ENCODE measurements at regions of chr10 and their contacts with region 1.

Region 1: DNA sequence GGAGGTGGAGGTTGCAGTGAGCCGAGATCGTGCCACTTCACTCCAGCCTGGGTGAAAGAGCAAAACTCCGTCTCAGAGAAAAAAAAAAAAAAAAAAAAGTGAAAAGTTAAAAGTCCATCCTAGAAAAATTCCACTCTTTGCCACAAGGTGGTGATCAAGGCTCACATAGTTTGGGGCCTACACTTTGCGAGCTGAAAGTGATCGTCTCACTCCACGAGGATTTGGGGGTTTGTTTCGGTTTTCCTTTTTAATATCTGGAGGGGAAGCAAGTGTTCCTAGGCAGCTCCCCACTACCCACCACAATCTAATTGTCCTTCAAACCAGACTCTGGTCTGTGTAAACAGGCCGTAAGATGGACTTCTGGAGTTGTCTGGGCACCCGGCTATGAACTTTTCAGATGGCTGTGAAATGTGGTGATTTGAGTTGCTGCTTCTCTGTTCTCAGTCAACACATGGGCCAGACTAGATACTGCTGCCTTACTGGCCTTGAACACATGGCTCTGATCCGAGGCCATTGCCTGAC is 27.1 kb downstream of the PRLHR start:
- DNase-seq: peak; percentile 56
- ATAC-seq: peak; percentile 69
- H3K4me3 ChIP-seq: no peak overlapping the region
- H3K27ac ChIP-seq: no peak overlapping the region
- H3K4me1 ChIP-seq: peaks cover 2% of the 10 kb centered on the region; the same call in 1 of the 2 replicates
- H3K27me3 ChIP-seq: peaks cover 10% of the 10 kb centered on the region
- CTCF ChIP-seq: peak; percentile 82
- POLR2A ChIP-seq: no peak
- RAD21 ChIP-seq: peak; percentile 85

Region 2: GRCh38 chr10:118551535-118552100 is 16.8 kb before region 1 on chr10:
- CTCF ChIA-PET with region 1: no interaction called
- POLR2A ChIA-PET with region 1: no interaction called
- dilution Hi-C with region 1: no loop called
- in situ Hi-C with region 1: no loop called
- intact Hi-C with region 1: no loop called
- DNase-seq: no peak
- ATAC-seq: no peak
- H3K4me3 ChIP-seq: no peak overlapping the region
- H3K27ac ChIP-seq: no peak overlapping the region
- H3K4me1 ChIP-seq: no peaks in the 10 kb centered on the region
- H3K27me3 ChIP-seq: no peaks in the 10 kb centered on the region
- CTCF ChIP-seq: no peak
- POLR2A ChIP-seq: no peak
- RAD21 ChIP-seq: no peak

Region 3: DNA sequence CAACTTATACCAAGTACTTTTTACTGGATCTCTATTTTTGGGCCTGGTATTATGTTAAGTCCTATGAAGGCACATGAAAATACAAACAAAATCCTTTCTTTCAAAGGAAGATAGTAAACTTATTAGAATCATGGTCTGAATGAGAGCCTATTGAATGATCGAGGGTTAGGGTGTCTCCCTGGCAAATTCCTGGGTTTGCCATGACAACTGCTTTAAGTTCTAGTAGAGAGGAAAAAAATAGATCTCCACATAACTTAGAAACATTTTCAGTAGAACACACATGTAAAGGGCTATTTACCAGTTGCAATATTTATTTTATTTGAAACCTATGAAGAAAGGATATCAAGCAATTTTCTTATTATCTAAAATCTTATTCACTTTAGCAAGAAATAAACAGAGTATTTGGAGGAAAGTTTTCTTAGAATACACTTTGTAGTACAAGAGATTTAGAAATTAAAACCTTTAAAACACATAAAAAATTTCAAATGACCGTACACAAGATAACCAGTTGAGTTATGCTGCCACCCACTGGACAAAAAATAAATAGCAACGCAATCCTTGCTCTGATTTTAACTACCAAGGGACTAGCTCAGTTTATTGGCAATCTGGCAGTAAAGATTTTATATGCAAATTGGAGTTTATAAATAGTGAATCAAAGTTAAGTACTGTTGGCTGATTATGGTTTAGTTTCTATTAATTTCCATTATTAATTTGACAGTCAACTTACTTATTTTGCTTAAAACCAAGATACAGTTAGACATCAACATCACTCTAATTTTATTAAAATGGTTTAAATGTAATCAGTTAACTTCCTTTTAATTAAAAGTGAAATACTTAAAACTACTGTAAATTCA is 152.5 kb after region 1 on chr10:
- CTCF ChIA-PET with region 1: interaction called, 15 read pairs
- POLR2A ChIA-PET with region 1: interaction called, 5 read pairs
- dilution Hi-C with region 1: no loop called
- in situ Hi-C with region 1: loop called (anchors 5 kb)
- intact Hi-C with region 1: loop called (anchors 1 kb)
- DNase-seq: peak; percentile 62
- ATAC-seq: peak; percentile 82
- H3K4me3 ChIP-seq: no peak overlapping the region
- H3K27ac ChIP-seq: no peak overlapping the region
- H3K4me1 ChIP-seq: peaks cover 9% of the 10 kb centered on the region
- H3K27me3 ChIP-seq: no peaks in the 10 kb centered on the region
- CTCF ChIP-seq: peak; percentile 86
- POLR2A ChIP-seq: no peak
- RAD21 ChIP-seq: peak; percentile 82

Region 4: GRCh38 chr10:118754720-118755480 is 186.5 kb after region 1 on chr10 and contains the start of gene CACUL1:
- CTCF ChIA-PET with region 1: no interaction called
- POLR2A ChIA-PET with region 1: no interaction called
- dilution Hi-C with region 1: no loop called
- in situ Hi-C with region 1: no loop called
- intact Hi-C with region 1: loop called (anchors 1 kb)
- DNase-seq: peak; percentile 100
- ATAC-seq: peak; percentile 94
- H3K4me3 ChIP-seq: peak within 1 kb of the TSS; percentile 88
- H3K27ac ChIP-seq: peak within 1 kb of the TSS; percentile 77
- H3K4me1 ChIP-seq: no peaks in the 10 kb centered on the region
- H3K27me3 ChIP-seq: 0 out of 2 replicates have a peak, but pooled peaks cover 1% of the 10 kb centered on the region
- CTCF ChIP-seq: no peak
- POLR2A ChIP-seq: peak; percentile 85
- RAD21 ChIP-seq: no peak
- total RNA-seq, gene CACUL1: 23.5 and 24.7 TPM in 2 replicates

Region 5: GRCh38 chr10:118850418-118851061 is 282.2 kb after region 1 on chr10:
- CTCF ChIA-PET with region 1: interaction called, 4 read pairs
- POLR2A ChIA-PET with region 1: no interaction called
- dilution Hi-C with region 1: no loop called
- in situ Hi-C with region 1: loop called (anchors 10 kb)
- intact Hi-C with region 1: loop called (anchors 1 kb)
- DNase-seq: peak; percentile 36
- ATAC-seq: peak; percentile 32; the same call in 1 of the 2 replicates
- H3K4me3 ChIP-seq: no peak overlapping the region
- H3K27ac ChIP-seq: no peak overlapping the region
- H3K4me1 ChIP-seq: no peaks in the 10 kb centered on the region
- H3K27me3 ChIP-seq: peaks cover 9% of the 10 kb centered on the region
- CTCF ChIP-seq: peak; percentile 46
- POLR2A ChIP-seq: no peak
- RAD21 ChIP-seq: peak; percentile 47

Region 6: DNA sequence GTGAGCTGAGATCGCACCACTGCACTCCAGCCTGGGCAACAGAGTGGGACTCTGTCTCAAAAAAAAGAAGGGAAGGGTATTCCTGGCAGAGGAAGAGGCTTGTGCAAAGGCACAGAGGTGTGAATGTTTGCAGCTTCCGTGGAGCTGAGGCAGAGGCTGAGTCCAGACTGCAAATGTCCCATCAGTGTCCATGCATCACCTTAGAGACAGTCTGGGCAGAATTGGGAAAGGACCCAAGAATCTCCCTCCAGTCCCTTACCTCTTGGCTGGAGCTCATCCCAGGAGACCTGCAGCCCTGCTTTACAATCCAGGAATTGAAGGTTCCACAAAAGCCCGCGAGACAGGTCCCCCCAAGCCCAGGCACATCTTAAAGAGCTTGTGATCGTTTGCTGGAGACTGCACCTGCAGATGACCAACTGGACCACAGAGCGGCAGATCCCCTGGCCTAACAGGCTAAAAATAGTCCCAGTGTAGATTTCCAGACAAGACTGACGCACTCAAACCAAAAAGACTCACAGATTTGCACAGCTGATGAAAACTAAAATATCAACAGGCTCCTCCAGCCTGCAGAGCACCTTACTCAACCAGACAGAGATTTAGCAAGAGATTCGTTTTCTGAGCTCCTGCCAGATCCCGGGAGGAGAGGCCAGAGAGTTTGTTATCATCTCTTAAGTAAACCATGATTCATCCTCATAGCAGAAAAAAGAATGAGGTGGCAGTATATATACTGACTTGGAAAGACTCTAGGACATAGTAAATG is 438.2 kb after region 1 on chr10:
- CTCF ChIA-PET with region 1: no interaction called
- POLR2A ChIA-PET with region 1: no interaction called
- dilution Hi-C with region 1: no loop called
- in situ Hi-C with region 1: no loop called
- intact Hi-C with region 1: loop called (anchors 5 kb)
- DNase-seq: peak; percentile 100
- ATAC-seq: peak; percentile 91
- H3K4me3 ChIP-seq: no peak overlapping the region
- H3K27ac ChIP-seq: no peak overlapping the region
- H3K4me1 ChIP-seq: peaks cover 12% of the 10 kb centered on the region
- H3K27me3 ChIP-seq: peaks cover 25% of the 10 kb centered on the region
- CTCF ChIP-seq: 0 out of 2 replicates have a peak, but pooled peaks have one; percentile 3
- POLR2A ChIP-seq: no peak
- RAD21 ChIP-seq: no peak

Region 7: DNA sequence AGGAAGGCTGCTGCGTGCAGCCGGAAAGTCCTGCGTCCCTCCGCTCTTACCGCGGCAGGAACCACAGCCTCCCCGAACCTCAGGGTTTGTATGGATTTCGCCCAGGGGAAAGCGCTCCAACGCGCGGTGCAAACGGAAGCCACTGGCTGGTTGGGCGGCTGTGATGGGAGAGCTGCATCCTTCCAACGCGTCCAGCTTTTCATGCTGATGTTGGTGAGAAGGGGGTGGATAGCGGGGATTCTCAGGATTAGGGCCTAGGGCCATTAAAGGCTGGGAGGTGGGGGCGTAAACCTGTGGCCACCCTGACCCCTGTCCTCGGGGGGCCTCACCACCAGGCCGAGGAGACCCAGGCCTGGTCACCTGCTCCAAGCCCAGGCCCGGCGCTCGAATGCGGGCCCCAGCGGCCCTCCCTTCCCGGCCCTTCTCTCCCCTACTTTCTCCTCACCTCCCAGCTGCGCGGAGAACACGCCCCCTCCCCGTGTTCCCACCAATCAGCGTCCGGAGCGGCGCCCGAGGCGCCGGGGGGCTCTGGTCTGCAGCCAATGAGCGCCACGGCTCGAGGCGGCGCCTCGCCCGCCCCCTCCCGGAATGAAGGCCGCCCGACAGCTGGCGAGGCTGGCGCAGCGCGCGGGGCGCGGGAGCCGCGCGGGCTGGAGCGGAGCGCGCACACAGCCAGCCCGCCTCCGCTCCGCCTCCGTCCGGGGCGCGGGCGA is 460.7 kb after region 1 on chr10:
- CTCF ChIA-PET with region 1: no interaction called
- POLR2A ChIA-PET with region 1: no interaction called
- dilution Hi-C with region 1: no loop called
- in situ Hi-C with region 1: no loop called
- intact Hi-C with region 1: loop called (anchors 2 kb)
- DNase-seq: peak; percentile 81
- ATAC-seq: peak; percentile 84
- H3K4me3 ChIP-seq: peak overlapping the region; percentile 60; the same call in 1 of the 2 replicates
- H3K27ac ChIP-seq: no peak overlapping the region
- H3K4me1 ChIP-seq: peaks cover 9% of the 10 kb centered on the region
- H3K27me3 ChIP-seq: peaks cover 2% of the 10 kb centered on the region; the same call in 1 of the 2 replicates
- CTCF ChIP-seq: peak; percentile 26; the same call in 1 of the 2 replicates
- POLR2A ChIP-seq: no peak
- RAD21 ChIP-seq: no peak

Measured in IMR-90 (cell line).